Endothelial cell of umbilical vein (primary cell): ENCODE measurements at regions of chr12 and their contacts with region 1.

Region 1: DNA sequence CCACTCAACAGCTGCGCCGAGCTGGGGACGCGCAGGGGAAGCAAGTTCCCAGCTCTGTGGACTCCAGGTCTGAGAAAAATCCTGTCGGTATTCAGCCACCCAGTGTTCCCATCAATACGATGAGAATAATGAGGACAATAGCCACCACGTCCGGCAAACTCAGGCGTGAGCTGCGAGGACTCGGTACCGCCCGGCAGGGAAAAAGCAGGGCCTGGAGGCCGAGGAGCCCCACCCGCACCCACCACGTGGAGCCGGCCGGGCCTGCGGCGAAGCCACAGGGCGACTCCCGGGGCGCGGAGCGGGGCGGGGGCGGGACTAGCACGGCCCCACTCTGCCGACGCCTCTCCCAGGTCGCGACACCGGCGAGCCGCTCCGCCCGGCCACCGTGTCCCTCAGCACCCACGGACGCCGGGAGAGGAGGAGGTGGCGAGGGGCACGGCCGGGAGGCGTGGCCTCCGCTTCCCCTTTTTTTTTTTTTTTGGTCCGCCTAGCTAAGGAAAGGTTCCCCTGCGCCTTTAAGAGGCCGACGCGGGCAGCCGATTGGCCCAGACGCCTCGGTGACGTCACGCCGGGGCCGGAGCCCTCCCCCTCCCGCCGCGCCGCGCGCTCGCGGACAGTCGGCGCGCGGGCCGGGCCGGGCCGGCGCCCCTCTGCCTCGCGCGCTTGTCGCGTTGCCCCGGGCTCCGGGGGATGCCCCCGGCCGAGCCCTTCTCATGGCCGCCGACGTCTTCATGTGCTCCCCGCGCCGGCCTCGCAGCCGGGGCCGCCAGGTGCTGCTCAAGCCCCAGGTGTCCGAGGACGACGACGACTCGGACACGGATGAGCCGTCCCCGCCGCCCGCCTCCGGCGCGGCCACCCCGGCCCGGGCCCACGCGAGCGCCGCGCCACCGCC is at the start of gene MLXIP:
- DNase-seq: peak; percentile 92
- H3K4me3 ChIP-seq: peak within 1 kb of the TSS; percentile 44 to 76 (median 44)
- H3K27ac ChIP-seq: peak within 1 kb of the TSS; percentile 57
- H3K4me1 ChIP-seq: peaks cover 36% of the 10 kb centered on the region
- H3K27me3 ChIP-seq: no peaks in the 10 kb centered on the region
- CTCF ChIP-seq: no peak
- POLR2A ChIP-seq: peak; percentile 95
- total RNA-seq, gene MLXIP: 65.5 and 72.5 TPM in 2 replicates

Region 2: DNA sequence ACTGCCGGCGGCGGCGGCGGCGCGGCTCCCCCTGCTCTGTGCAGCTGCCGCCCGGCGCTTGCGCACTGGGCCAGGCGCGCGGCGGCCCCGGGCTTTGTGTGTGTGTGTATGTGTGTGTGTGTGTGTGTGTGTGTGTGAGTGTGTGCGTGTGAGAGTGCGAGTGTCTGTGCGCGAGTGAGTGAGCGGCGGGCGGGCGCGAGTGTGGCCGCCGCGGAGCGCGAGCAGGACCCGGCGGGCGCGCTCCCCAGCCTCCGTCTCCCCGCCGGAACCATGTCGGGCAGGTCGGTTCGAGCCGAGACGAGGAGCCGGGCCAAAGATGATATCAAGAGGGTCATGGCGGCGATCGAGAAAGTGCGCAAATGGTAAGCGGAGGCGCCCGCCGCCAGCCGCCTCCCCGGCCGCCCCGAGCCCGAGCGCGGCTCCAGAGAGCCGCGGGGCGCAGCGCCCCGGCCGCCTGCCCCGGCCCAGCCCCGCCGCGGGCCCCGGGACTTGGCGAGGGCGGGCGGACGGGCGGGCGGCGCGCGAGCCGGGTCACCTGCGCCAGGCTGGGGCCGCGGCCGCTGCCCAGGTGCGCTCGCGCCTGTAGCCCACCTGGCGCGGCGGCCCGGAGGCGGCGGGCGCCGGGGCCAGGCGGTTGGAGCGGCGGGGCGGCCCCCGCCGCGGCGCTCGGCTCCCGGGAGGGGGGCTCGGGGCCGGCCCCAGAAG is 56.4 kb before region 1 on chr12 and contains the start of gene BCL7A:
- CTCF ChIA-PET with region 1: no interaction called
- POLR2A ChIA-PET with region 1: no interaction called
- dilution Hi-C with region 1: no loop called
- intact Hi-C with region 1: loop called (anchors 5 kb)
- DNase-seq: peak; percentile 72
- H3K4me3 ChIP-seq: peak within 1 kb of the TSS; percentile 58 to 78 (median 70)
- H3K27ac ChIP-seq: peak within 1 kb of the TSS; percentile 46
- H3K4me1 ChIP-seq: peaks cover 19% of the 10 kb centered on the region
- H3K27me3 ChIP-seq: no peaks in the 10 kb centered on the region
- CTCF ChIP-seq: no peak
- POLR2A ChIP-seq: peak; percentile 39
- total RNA-seq, gene BCL7A: 11.1 and 12.6 TPM in 2 replicates

Region 3: GRCh38 chr12:122051231-122051876 is 27.0 kb before region 1 on chr12:
- CTCF ChIA-PET with region 1: interaction called, 30 read pairs
- POLR2A ChIA-PET with region 1: no interaction called
- dilution Hi-C with region 1: no loop called
- intact Hi-C with region 1: no loop called
- DNase-seq: peak; percentile 39
- H3K4me3 ChIP-seq: no peak overlapping the region
- H3K27ac ChIP-seq: no peak overlapping the region
- H3K4me1 ChIP-seq: no peaks in the 10 kb centered on the region
- H3K27me3 ChIP-seq: no peaks in the 10 kb centered on the region
- CTCF ChIP-seq: no peak
- POLR2A ChIP-seq: no peak

Region 4: GRCh38 chr12:122064025-122064777 is 14.2 kb before region 1 on chr12:
- CTCF ChIA-PET with region 1: interaction called, 33 read pairs
- POLR2A ChIA-PET with region 1: interaction called, 12 read pairs
- dilution Hi-C with region 1: no loop called
- intact Hi-C with region 1: loop called (anchors 1 kb)
- DNase-seq: peak; percentile 95
- H3K4me3 ChIP-seq: no peak overlapping the region
- H3K27ac ChIP-seq: peak overlapping the region; percentile 60
- H3K4me1 ChIP-seq: peaks cover 37% of the 10 kb centered on the region
- H3K27me3 ChIP-seq: no peaks in the 10 kb centered on the region
- CTCF ChIP-seq: peak; percentile 48 to 57
- POLR2A ChIP-seq: peak; percentile 58

Region 5: DNA sequence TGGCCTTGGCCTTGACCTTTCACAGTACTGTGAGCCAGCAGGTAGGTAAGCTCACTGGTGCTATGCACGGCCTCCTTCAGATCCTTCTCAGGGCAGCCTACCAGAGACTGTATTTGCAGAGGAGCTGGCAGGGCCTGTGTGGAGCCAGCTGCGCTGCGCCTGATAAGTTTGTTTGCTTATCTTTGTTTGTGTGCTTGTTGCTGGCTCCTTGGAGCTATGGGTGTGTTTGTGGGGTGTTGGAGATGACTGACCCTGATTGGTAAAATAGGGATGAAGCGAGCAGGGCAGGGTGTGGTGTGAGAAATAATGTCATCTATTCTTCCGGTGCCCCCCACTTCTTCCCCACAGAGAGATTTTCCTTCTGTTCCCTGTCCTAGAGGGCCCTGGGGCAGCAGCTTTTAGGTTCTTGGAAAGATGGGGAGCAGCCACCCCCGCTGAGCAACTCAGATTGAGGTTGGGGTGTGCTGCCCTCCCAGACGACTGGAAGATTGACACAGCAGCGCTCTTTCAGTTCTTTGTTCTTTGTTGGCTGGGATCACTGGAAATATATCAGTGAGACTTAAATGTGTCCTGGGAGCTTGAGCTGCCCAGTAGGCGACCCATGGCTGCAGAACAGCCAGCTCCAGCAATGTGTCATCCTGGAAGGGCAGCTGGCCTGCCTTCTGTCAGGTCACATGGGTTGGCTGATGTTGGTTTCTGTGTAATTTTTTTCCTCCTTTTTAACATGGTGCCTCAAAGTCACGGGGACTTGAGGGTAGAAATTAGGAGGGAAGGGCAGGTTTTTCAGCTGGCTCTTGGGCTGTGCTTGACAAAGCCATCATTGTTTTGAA is 19.8 kb after region 1 on chr12:
- CTCF ChIA-PET with region 1: interaction called, 10 read pairs
- POLR2A ChIA-PET with region 1: interaction called, 4 read pairs
- dilution Hi-C with region 1: no loop called
- intact Hi-C with region 1: no loop called
- DNase-seq: peak; percentile 67
- H3K4me3 ChIP-seq: no peak overlapping the region
- H3K27ac ChIP-seq: peak overlapping the region; percentile 31
- H3K4me1 ChIP-seq: peaks cover 31% of the 10 kb centered on the region
- H3K27me3 ChIP-seq: no peaks in the 10 kb centered on the region
- CTCF ChIP-seq: no peak
- POLR2A ChIP-seq: no peak

Region 6: GRCh38 chr12:122107261-122107660 is 28.9 kb after region 1 on chr12:
- CTCF ChIA-PET with region 1: interaction called, 10 read pairs
- POLR2A ChIA-PET with region 1: interaction called, 7 read pairs
- dilution Hi-C with region 1: no loop called
- intact Hi-C with region 1: no loop called
- DNase-seq: no peak
- H3K4me3 ChIP-seq: no peak overlapping the region
- H3K27ac ChIP-seq: no peak overlapping the region
- H3K4me1 ChIP-seq: peaks cover 6% of the 10 kb centered on the region
- H3K27me3 ChIP-seq: no peaks in the 10 kb centered on the region
- CTCF ChIP-seq: no peak
- POLR2A ChIP-seq: no peak

Region 7: GRCh38 chr12:122123051-122123760 is 44.8 kb after region 1 on chr12:
- CTCF ChIA-PET with region 1: interaction called, 42 read pairs
- POLR2A ChIA-PET with region 1: interaction called, 4 read pairs
- dilution Hi-C with region 1: no loop called
- intact Hi-C with region 1: loop called (anchors 1 kb)
- DNase-seq: peak; percentile 70
- H3K4me3 ChIP-seq: no peak overlapping the region
- H3K27ac ChIP-seq: no peak overlapping the region
- H3K4me1 ChIP-seq: peaks cover 6% of the 10 kb centered on the region
- H3K27me3 ChIP-seq: no peaks in the 10 kb centered on the region
- CTCF ChIP-seq: peak; percentile 65 to 67
- POLR2A ChIP-seq: no peak